K562 (cell line): ENCODE measurements at regions of chr20 and their contacts with region 1.

Region 1: GRCh38 chr20:34069341-34070078 is 42.5 kb downstream of the EIF2S2 start:
- DNase-seq: peak; percentile 61 to 80 (median 64)
- ATAC-seq: peak; percentile 93
- H3K4me3 ChIP-seq: no peak overlapping the region
- H3K27ac ChIP-seq: no peak overlapping the region
- H3K4me1 ChIP-seq: peaks cover 0 to 14% of the 10 kb centered on the region in 2 experiments; a peak in 2 of 5 replicates
- H3K27me3 ChIP-seq: no peaks in the 10 kb centered on the region
- CTCF ChIP-seq: peak; percentile 84 to 93 (median 87)
- EP300 ChIP-seq: no peak
- POLR2A ChIP-seq: no peak
- RAD21 ChIP-seq: peak; percentile 86 to 91

Region 2: GRCh38 chr20:33387177-33387576 is 682.3 kb before region 1 on chr20:
- CTCF ChIA-PET with region 1: no interaction called
- POLR2A ChIA-PET with region 1: no interaction called
- in situ Hi-C with region 1: no loop called
- intact Hi-C with region 1: no loop called
- DNase-seq: no peak
- ATAC-seq: no peak
- H3K4me3 ChIP-seq: no peak overlapping the region
- H3K27ac ChIP-seq: no peak overlapping the region
- H3K4me1 ChIP-seq: no peaks in the 10 kb centered on the region
- H3K27me3 ChIP-seq: no peaks in the 10 kb centered on the region
- CTCF ChIP-seq: no peak
- EP300 ChIP-seq: no peak
- POLR2A ChIP-seq: no peak
- RAD21 ChIP-seq: no peak

Region 3: GRCh38 chr20:33791959-33792597 is 277.4 kb before region 1 on chr20:
- CTCF ChIA-PET with region 1: no interaction called
- POLR2A ChIA-PET with region 1: no interaction called
- in situ Hi-C with region 1: no loop called
- intact Hi-C with region 1: loop called (anchors 10 kb)
- DNase-seq: peak; percentile 59 to 77 (median 74)
- ATAC-seq: peak; percentile 83
- H3K4me3 ChIP-seq: no peak overlapping the region
- H3K27ac ChIP-seq: no peak overlapping the region
- H3K4me1 ChIP-seq: peaks cover 8 to 19% of the 10 kb centered on the region in 2 experiments; a peak in 4 of 5 replicates
- H3K27me3 ChIP-seq: no peaks in the 10 kb centered on the region
- CTCF ChIP-seq: peak; percentile 72 to 86 (median 78)
- EP300 ChIP-seq: no peak
- POLR2A ChIP-seq: no peak
- RAD21 ChIP-seq: peak in 1 of 2 experiments; percentile 83

Region 4: GRCh38 chr20:33925867-33926266 is 143.6 kb before region 1 on chr20:
- CTCF ChIA-PET with region 1: no interaction called
- POLR2A ChIA-PET with region 1: no interaction called
- in situ Hi-C with region 1: loop called (anchors 10 kb)
- intact Hi-C with region 1: no loop called
- DNase-seq: no peak
- ATAC-seq: no peak
- H3K4me3 ChIP-seq: no peak overlapping the region
- H3K27ac ChIP-seq: no peak overlapping the region
- H3K4me1 ChIP-seq: no peaks in the 10 kb centered on the region; a peak in 1 of 5 replicates
- H3K27me3 ChIP-seq: peaks cover 41 to 47% of the 10 kb centered on the region in 2 experiments
- CTCF ChIP-seq: no peak
- EP300 ChIP-seq: no peak
- POLR2A ChIP-seq: no peak
- RAD21 ChIP-seq: no peak

Region 5: GRCh38 chr20:33947709-33948295 is 121.7 kb before region 1 on chr20:
- CTCF ChIA-PET with region 1: interaction called, 15 read pairs
- POLR2A ChIA-PET with region 1: no interaction called
- in situ Hi-C with region 1: loop called (anchors 5 kb)
- intact Hi-C with region 1: loop called (anchors 1 kb)
- DNase-seq: peak; percentile 81 to 91 (median 88)
- ATAC-seq: peak; percentile 94
- H3K4me3 ChIP-seq: no peak overlapping the region
- H3K27ac ChIP-seq: no peak overlapping the region
- H3K4me1 ChIP-seq: no peaks in the 10 kb centered on the region
- H3K27me3 ChIP-seq: peaks cover 0 to 15% of the 10 kb centered on the region in 2 experiments; a peak in 3 of 5 replicates
- CTCF ChIP-seq: peak; percentile 92 to 99 (median 97)
- EP300 ChIP-seq: no peak
- POLR2A ChIP-seq: no peak
- RAD21 ChIP-seq: peak; percentile 58 to 94

Region 6: GRCh38 chr20:34030453-34030852 is 39.1 kb before region 1 on chr20:
- CTCF ChIA-PET with region 1: no interaction called
- POLR2A ChIA-PET with region 1: no interaction called
- in situ Hi-C with region 1: no loop called
- intact Hi-C with region 1: no loop called
- DNase-seq: no peak
- ATAC-seq: no peak
- H3K4me3 ChIP-seq: no peak overlapping the region
- H3K27ac ChIP-seq: no peak overlapping the region
- H3K4me1 ChIP-seq: no peaks in the 10 kb centered on the region
- H3K27me3 ChIP-seq: no peaks in the 10 kb centered on the region
- CTCF ChIP-seq: no peak
- EP300 ChIP-seq: no peak
- POLR2A ChIP-seq: no peak
- RAD21 ChIP-seq: no peak

Region 7: GRCh38 chr20:34129518-34130162 is 60.1 kb after region 1 on chr20:
- CTCF ChIA-PET with region 1: interaction called, 16 read pairs
- POLR2A ChIA-PET with region 1: no interaction called
- in situ Hi-C with region 1: no loop called
- intact Hi-C with region 1: loop called (anchors 1 kb)
- DNase-seq: peak; percentile 64 to 84 (median 69)
- ATAC-seq: peak; percentile 94
- H3K4me3 ChIP-seq: no peak overlapping the region
- H3K27ac ChIP-seq: no peak overlapping the region
- H3K4me1 ChIP-seq: peaks cover 7 to 12% of the 10 kb centered on the region in 2 experiments; a peak in 4 of 5 replicates
- H3K27me3 ChIP-seq: no peaks in the 10 kb centered on the region
- CTCF ChIP-seq: peak; percentile 81 to 95 (median 89)
- EP300 ChIP-seq: no peak
- POLR2A ChIP-seq: no peak
- RAD21 ChIP-seq: peak; percentile 86 to 93